ENCODE measurements at regions of chr9 and their contacts with region 1.

Region 1: GRCh38 chr9:15422372-15423230 is at the start of gene SNAPC3:
- DNase-seq: peak; percentile 94
- H3K4me3 Mint-ChIP-seq: peak within 1 kb of the TSS; percentile 95
- H3K27ac Mint-ChIP-seq: peak within 1 kb of the TSS; percentile 88
- H3K4me1 Mint-ChIP-seq: peaks cover 40% of the 10 kb centered on the region
- H3K27me3 Mint-ChIP-seq: peaks cover 5% of the 10 kb centered on the region
- total RNA-seq, gene SNAPC3: 34.0 and 34.7 TPM in 2 replicates

Region 2: GRCh38 chr9:15231788-15232635 is 190.6 kb before region 1 on chr9:
- intact Hi-C with region 1: loop called (anchors 1 kb)
- DNase-seq: no peak
- H3K4me3 Mint-ChIP-seq: no peak overlapping the region
- H3K27ac Mint-ChIP-seq: no peak overlapping the region
- H3K4me1 Mint-ChIP-seq: peaks cover 25% of the 10 kb centered on the region
- H3K27me3 Mint-ChIP-seq: no peaks in the 10 kb centered on the region

Region 3: GRCh38 chr9:15357050-15357653 is 65.4 kb before region 1 on chr9:
- intact Hi-C with region 1: loop called (anchors 5 kb)
- DNase-seq: peak; percentile 34
- H3K4me3 Mint-ChIP-seq: no peak overlapping the region
- H3K27ac Mint-ChIP-seq: no peak overlapping the region
- H3K4me1 Mint-ChIP-seq: peaks cover 16% of the 10 kb centered on the region
- H3K27me3 Mint-ChIP-seq: no peaks in the 10 kb centered on the region

Region 4: GRCh38 chr9:15377625-15378540 is 44.7 kb before region 1 on chr9:
- intact Hi-C with region 1: no loop called
- DNase-seq: no peak
- H3K4me3 Mint-ChIP-seq: no peak overlapping the region
- H3K27ac Mint-ChIP-seq: no peak overlapping the region
- H3K4me1 Mint-ChIP-seq: no peaks in the 10 kb centered on the region
- H3K27me3 Mint-ChIP-seq: peaks cover 20% of the 10 kb centered on the region

Region 5: DNA sequence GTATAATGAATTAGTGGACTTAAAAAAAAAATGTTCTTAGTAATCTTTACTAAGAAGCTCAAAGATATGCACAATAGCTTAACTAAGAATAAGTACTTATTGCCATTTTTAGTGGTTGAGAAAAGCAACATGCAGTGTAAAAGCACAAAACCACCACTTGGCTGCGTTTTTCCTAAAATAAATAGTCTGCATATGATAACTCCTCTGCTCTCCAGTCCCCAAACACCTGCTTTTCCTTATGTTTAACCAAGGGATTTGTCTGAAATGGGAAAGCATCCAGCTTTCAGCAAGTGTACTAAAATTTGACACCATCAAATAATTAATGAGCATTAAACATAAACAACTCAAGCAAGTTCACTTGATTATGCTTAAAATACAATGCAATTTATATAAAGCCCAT is 46.8 kb after region 1 on chr9:
- intact Hi-C with region 1: no loop called
- DNase-seq: no peak
- H3K4me3 Mint-ChIP-seq: no peak overlapping the region
- H3K27ac Mint-ChIP-seq: no peak overlapping the region
- H3K4me1 Mint-ChIP-seq: peaks cover 11% of the 10 kb centered on the region
- H3K27me3 Mint-ChIP-seq: no peaks in the 10 kb centered on the region

Region 6: GRCh38 chr9:15529566-15530324 is 107.1 kb after region 1 on chr9:
- intact Hi-C with region 1: loop called (anchors 5 kb)
- DNase-seq: no peak
- H3K4me3 Mint-ChIP-seq: no peak overlapping the region
- H3K27ac Mint-ChIP-seq: no peak overlapping the region
- H3K4me1 Mint-ChIP-seq: peaks cover 10% of the 10 kb centered on the region
- H3K27me3 Mint-ChIP-seq: peaks cover 5% of the 10 kb centered on the region

Region 7: GRCh38 chr9:15606643-15607472 is 184.3 kb after region 1 on chr9:
- intact Hi-C with region 1: loop called (anchors 5 kb)
- DNase-seq: no peak
- H3K4me3 Mint-ChIP-seq: no peak overlapping the region
- H3K27ac Mint-ChIP-seq: no peak overlapping the region
- H3K4me1 Mint-ChIP-seq: peaks cover 17% of the 10 kb centered on the region
- H3K27me3 Mint-ChIP-seq: no peaks in the 10 kb centered on the region

Region 8: GRCh38 chr9:16794871-16795639 is 1372.5 kb after region 1 on chr9:
- intact Hi-C with region 1: no loop called
- DNase-seq: no peak
- H3K4me3 Mint-ChIP-seq: no peak overlapping the region
- H3K27ac Mint-ChIP-seq: no peak overlapping the region
- H3K4me1 Mint-ChIP-seq: no peaks in the 10 kb centered on the region
- H3K27me3 Mint-ChIP-seq: no peaks in the 10 kb centered on the region